Naive thymus-derived CD4-positive, alpha-beta T cell (primary cell): ENCODE measurements at regions of chr19 and their contacts with region 1.

Region 1: GRCh38 chr19:46265217-46265828 is 31.5 kb upstream of the HIF3A start:
- DNase-seq: peak; percentile 40 to 72 (median 63)
- ATAC-seq: peak; percentile 84
- H3K4me3 ChIP-seq: no peak overlapping the region
- H3K4me3 Mint-ChIP-seq: no peak overlapping the region
- H3K27ac ChIP-seq: no peak overlapping the region
- H3K27ac Mint-ChIP-seq: peak overlapping the region in 1 of 9 donors; percentile 13
- H3K4me1 ChIP-seq: peaks cover 0 to 11% of the 10 kb centered on the region in 2 donors
- H3K4me1 Mint-ChIP-seq: peaks cover 4 to 12% (median 7%) of the 10 kb centered on the region in 7 donors
- H3K27me3 ChIP-seq: peaks cover 0 to 2% of the 10 kb centered on the region in 2 donors
- H3K27me3 Mint-ChIP-seq: peaks cover 36 to 60% (median 38%) of the 10 kb centered on the region in 5 donors

Region 2: GRCh38 chr19:46022431-46023310 is 242.7 kb before region 1 on chr19 and contains the start of gene PGLYRP1:
- CTCF ChIA-PET with region 1: interaction called, 21 read pairs
- POLR2A ChIA-PET with region 1: no interaction called
- intact Hi-C with region 1: no loop called
- DNase-seq: no peak
- ATAC-seq: no peak
- H3K4me3 ChIP-seq: no peak within 1 kb of the TSS
- H3K4me3 Mint-ChIP-seq: no peak within 1 kb of the TSS
- H3K27ac ChIP-seq: no peak within 1 kb of the TSS
- H3K27ac Mint-ChIP-seq: no peak within 1 kb of the TSS
- H3K4me1 ChIP-seq: peaks cover 0 to 8% of the 10 kb centered on the region in 2 donors
- H3K4me1 Mint-ChIP-seq: peaks cover 12 to 21% (median 18%) of the 10 kb centered on the region in 7 donors
- H3K27me3 ChIP-seq: no peaks in the 10 kb centered on the region
- H3K27me3 Mint-ChIP-seq: peaks cover 11 to 31% (median 25%) of the 10 kb centered on the region in 5 donors
- total RNA-seq, gene PGLYRP1: not detected

Region 3: DNA sequence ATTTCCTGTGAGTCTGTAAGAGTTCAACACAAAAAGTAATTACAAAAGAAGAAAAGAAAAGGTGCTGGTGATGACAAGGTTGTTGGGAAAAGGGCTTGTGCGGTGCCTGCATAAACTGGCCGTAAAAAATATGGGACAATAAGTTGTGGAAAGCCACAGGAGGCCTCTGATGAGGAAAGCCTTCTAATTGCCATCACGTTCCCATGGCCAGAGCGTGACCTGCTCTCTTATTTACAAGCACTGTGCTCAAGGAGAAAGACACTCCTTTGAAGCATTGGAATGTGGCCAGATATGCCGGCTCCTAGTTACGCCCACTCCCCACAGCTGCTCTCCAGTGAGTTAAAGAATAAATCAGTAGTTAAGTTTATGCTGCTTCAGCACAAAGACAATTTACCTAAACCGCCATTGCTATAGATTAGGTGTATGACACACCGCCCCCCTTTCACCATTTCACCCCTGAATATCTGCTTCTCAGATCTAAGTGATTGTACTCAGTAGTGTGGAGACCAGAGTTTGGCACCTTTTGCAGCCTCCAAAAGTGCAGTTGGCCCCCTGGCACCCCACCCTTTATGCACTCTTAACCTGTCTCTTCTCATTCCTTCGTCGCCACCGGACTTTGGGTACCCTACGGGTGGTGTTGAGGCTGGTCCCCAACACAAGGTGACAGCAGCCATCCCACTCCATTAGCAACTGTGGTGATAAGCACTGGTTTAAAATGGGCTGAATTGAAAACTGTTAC is 234.3 kb before region 1 on chr19:
- CTCF ChIA-PET with region 1: interaction called, 21 read pairs
- POLR2A ChIA-PET with region 1: no interaction called
- intact Hi-C with region 1: loop called in 1 of 2 experiments (anchors 1 kb)
- DNase-seq: no peak
- ATAC-seq: no peak
- H3K4me3 ChIP-seq: no peak overlapping the region
- H3K4me3 Mint-ChIP-seq: no peak overlapping the region
- H3K27ac ChIP-seq: no peak overlapping the region
- H3K27ac Mint-ChIP-seq: no peak overlapping the region
- H3K4me1 ChIP-seq: peaks cover 0 to 5% of the 10 kb centered on the region in 2 donors
- H3K4me1 Mint-ChIP-seq: peaks cover 12 to 17% (median 14%) of the 10 kb centered on the region in 7 donors
- H3K27me3 ChIP-seq: no peaks in the 10 kb centered on the region
- H3K27me3 Mint-ChIP-seq: peaks cover 6 to 28% (median 20%) of the 10 kb centered on the region in 5 donors

Region 4: GRCh38 chr19:46076951-46077816 is 188.1 kb before region 1 on chr19:
- CTCF ChIA-PET with region 1: no interaction called
- POLR2A ChIA-PET with region 1: no interaction called
- intact Hi-C with region 1: loop called in 1 of 2 experiments (anchors 1 kb)
- DNase-seq: peak in 2 of 9 donors; percentile 6 to 14
- ATAC-seq: peak; percentile 68
- H3K4me3 ChIP-seq: no peak overlapping the region
- H3K4me3 Mint-ChIP-seq: peak overlapping the region in 8 of 10 donors; percentile 16 to 61 (median 41)
- H3K27ac ChIP-seq: no peak overlapping the region
- H3K27ac Mint-ChIP-seq: no peak overlapping the region
- H3K4me1 ChIP-seq: no peaks in the 10 kb centered on the region
- H3K4me1 Mint-ChIP-seq: peaks cover 3 to 15% (median 9%) of the 10 kb centered on the region in 7 donors
- H3K27me3 ChIP-seq: peaks cover 0 to 12% of the 10 kb centered on the region in 2 donors
- H3K27me3 Mint-ChIP-seq: peaks cover 73 to 87% (median 77%) of the 10 kb centered on the region in 5 donors

Region 5: DNA sequence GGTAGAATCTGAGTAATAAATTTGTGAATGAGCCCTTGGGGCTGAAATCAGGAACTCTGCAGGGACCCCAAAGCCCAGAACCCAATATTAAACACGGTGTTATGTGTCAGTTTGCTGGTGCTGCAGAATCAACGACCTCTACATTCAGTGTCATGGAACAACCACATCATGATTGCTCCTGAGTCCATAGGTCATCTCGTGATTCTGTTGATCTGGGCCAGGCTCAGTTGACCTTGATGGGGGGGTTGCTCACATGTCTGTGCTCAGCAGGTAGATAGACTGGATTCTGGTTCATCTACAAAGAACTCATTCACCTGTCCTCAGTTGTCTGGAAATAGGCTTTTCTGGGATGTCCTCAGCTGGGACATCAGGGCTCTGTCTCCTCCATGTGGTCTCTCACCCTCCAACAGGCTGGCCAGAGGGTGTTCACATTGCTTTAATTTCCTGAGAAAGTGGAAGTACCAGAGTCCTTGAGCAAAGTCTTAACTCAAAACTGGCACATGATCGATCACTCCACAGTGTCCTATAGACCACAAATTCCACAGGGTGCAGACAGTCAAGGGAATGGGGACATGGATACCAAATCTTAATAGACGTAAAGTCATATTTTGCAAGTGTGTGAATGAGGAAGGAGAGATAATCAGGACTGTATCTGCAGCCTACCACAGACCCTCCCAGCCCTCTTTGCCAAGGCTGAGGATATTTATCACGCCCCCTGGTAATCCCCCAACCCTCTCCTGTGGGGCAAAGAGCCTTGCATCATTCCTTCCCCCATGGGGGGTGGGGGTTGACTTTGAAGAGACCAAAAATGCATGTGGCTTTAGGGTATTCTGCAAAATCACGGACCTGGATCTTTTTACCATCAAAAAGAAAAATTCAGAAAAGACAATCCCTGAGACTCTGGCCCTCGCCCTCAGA is 75.1 kb before region 1 on chr19:
- CTCF ChIA-PET with region 1: no interaction called
- POLR2A ChIA-PET with region 1: no interaction called
- intact Hi-C with region 1: loop called in 1 of 2 experiments (anchors 2 kb)
- DNase-seq: no peak
- ATAC-seq: no peak
- H3K4me3 ChIP-seq: no peak overlapping the region
- H3K4me3 Mint-ChIP-seq: no peak overlapping the region
- H3K27ac ChIP-seq: no peak overlapping the region
- H3K27ac Mint-ChIP-seq: no peak overlapping the region
- H3K4me1 ChIP-seq: no peaks in the 10 kb centered on the region
- H3K4me1 Mint-ChIP-seq: peaks cover 0 to 2% (median under 1%) of the 10 kb centered on the region in 7 donors
- H3K27me3 ChIP-seq: peaks cover 2 to 6% of the 10 kb centered on the region in 2 donors
- H3K27me3 Mint-ChIP-seq: peaks cover 33 to 45% (median 41%) of the 10 kb centered on the region in 5 donors